ENCODE measurements at regions of chr17 and their contacts with region 1.

Region 1: DNA sequence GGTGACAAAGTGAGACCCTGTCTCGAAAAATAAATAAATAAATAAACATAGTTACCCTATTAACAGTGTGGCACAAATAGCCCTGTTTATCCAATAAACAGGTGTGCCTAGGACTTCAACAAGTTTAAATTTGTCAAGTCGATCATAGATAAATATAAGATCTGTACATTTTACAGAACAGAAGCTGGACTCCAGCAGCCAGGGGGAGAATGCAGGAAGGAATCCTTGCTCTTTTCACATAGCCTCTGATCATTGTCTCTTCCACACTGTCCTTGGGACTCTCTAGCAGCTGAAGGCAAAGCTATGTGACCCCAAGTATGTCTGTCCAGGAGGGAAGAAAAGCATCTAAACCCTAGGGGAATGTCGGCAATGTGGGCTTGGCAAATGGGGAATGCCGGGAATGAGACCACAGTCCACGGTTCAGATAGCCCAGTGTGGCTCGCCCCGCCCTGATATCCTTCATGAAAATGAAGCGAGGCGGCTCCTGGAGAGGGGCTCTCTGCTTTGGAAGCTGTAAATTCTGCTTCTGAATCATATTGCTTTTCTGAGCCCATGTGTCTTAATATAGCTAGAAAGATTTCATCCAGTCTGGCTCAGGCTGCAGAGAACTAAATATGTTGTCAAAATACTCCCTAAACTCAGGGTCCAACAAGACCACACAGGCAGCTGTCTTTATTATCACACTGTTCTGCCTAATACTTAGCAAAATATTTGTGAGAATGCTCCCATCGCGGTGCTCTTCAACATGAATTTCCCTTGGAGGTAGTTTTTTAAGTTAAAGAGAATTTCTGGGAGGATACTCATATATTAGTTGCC is 24.9 kb upstream of the GRB2 start:
- DNase-seq: peak in 1 of 3 donors; percentile 49
- ATAC-seq: peak in 1 of 2 donors; percentile 28
- H3K4me3 ChIP-seq: no peak overlapping the region
- H3K27ac ChIP-seq: peak overlapping the region; percentile 71
- H3K4me1 ChIP-seq: peaks cover 2% of the 10 kb centered on the region
- H3K27me3 ChIP-seq: no peaks in the 10 kb centered on the region

Region 2: GRCh38 chr17:75364078-75364477 is 66.3 kb before region 1 on chr17:
- intact Hi-C with region 1: no loop called
- DNase-seq: no peak
- ATAC-seq: no peak
- H3K4me3 ChIP-seq: no peak overlapping the region
- H3K27ac ChIP-seq: no peak overlapping the region
- H3K4me1 ChIP-seq: peaks cover 8% of the 10 kb centered on the region
- H3K27me3 ChIP-seq: no peaks in the 10 kb centered on the region

Region 3: GRCh38 chr17:75515496-75516254 is 85.3 kb after region 1 on chr17 and contains the start of gene CASKIN2:
- intact Hi-C with region 1: loop called (anchors 2 to 5 kb)
- DNase-seq: peak; percentile 97 to 99 (median 99)
- ATAC-seq: peak; percentile 91 to 94
- H3K4me3 ChIP-seq: peak within 1 kb of the TSS; percentile 73
- H3K27ac ChIP-seq: peak within 1 kb of the TSS; percentile 76
- H3K4me1 ChIP-seq: peaks cover 11% of the 10 kb centered on the region
- H3K27me3 ChIP-seq: no peaks in the 10 kb centered on the region
- total RNA-seq, gene CASKIN2: 38.0 to 50.4 (median 46.4) TPM

Measured in right cardiac atrium (tissue), 5 donors.